ENCODE measurements at regions of chr3 and their contacts with region 1.

Region 1: GRCh38 chr3:49371946-49372345 is 13.8 kb upstream of the GPX1 start:
- DNase-seq: no peak
- ATAC-seq: no peak
- H3K4me3 ChIP-seq: no peak overlapping the region
- H3K27ac ChIP-seq: no peak overlapping the region
- H3K4me1 ChIP-seq: no peaks in the 10 kb centered on the region
- H3K27me3 ChIP-seq: no peaks in the 10 kb centered on the region

Region 2: GRCh38 chr3:49248846-49249238 is 123.1 kb before region 1 on chr3:
- intact Hi-C with region 1: no loop called
- DNase-seq: no peak
- ATAC-seq: peak; percentile 81
- H3K4me3 ChIP-seq: no peak overlapping the region
- H3K27ac ChIP-seq: no peak overlapping the region
- H3K4me1 ChIP-seq: no peaks in the 10 kb centered on the region
- H3K27me3 ChIP-seq: no peaks in the 10 kb centered on the region

Region 3: DNA sequence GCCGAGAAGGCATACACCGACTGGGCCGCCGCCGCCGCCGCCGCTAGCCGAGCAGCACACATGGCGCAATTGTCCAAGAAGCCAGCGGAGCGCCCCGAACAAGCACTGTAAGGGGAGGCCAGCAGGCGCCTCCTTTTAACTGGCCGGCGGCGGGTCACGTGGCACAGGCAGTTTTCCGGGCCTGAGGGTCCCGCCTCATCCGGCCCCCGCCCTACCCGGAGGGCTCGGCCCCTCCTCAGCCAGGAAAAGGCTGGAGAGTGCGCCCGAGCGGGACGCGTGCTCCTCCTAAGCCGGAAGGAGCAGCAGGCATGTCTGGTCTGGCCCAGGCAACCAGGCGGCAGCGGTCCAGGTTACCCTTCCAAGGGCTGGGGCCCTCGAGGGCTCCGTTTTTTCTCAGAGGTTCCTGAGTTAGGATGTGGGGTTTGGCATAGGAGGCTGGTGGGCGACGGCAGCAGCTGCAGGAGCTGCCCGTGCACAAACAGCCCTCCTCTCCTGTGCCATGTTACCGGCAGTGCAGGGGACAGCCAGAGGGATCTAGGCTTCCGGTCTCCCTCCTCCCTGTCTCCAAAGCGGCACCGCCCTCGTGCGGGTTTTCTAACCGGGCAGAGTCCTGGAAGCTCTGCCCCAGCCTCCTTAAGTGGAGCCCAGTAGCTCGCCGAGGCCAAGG is 13.6 kb before region 1 on chr3 and contains the start of gene GPX1:
- intact Hi-C with region 1: loop called in 1 of 2 experiments (anchors 2 kb)
- DNase-seq: peak; percentile 98
- ATAC-seq: peak; percentile 97
- H3K4me3 ChIP-seq: peak within 1 kb of the TSS; percentile 39 to 52
- H3K27ac ChIP-seq: peak within 1 kb of the TSS; percentile 64 to 87
- H3K4me1 ChIP-seq: no peaks in the 10 kb centered on the region
- H3K27me3 ChIP-seq: no peaks in the 10 kb centered on the region
- total RNA-seq, gene GPX1: 174 to 209 TPM

Measured in aorta (tissue), 5 donors.